Activated CD4-positive, alpha-beta T cell treated with anti-CD3 and anti-CD28 coated beads for 36 hours (primary cell): ENCODE measurements at regions of chr17 and their contacts with region 1.

Region 1: GRCh38 chr17:36072431-36073121 is 8.5 kb downstream of the CCL18 start:
- DNase-seq: peak; percentile 88
- ATAC-seq: peak; percentile 85
- H3K4me3 Mint-ChIP-seq: no peak overlapping the region
- H3K27ac Mint-ChIP-seq: peak overlapping the region; percentile 58
- H3K4me1 Mint-ChIP-seq: peaks cover 27% of the 10 kb centered on the region
- H3K27me3 Mint-ChIP-seq: peaks cover 15% of the 10 kb centered on the region

Region 2: DNA sequence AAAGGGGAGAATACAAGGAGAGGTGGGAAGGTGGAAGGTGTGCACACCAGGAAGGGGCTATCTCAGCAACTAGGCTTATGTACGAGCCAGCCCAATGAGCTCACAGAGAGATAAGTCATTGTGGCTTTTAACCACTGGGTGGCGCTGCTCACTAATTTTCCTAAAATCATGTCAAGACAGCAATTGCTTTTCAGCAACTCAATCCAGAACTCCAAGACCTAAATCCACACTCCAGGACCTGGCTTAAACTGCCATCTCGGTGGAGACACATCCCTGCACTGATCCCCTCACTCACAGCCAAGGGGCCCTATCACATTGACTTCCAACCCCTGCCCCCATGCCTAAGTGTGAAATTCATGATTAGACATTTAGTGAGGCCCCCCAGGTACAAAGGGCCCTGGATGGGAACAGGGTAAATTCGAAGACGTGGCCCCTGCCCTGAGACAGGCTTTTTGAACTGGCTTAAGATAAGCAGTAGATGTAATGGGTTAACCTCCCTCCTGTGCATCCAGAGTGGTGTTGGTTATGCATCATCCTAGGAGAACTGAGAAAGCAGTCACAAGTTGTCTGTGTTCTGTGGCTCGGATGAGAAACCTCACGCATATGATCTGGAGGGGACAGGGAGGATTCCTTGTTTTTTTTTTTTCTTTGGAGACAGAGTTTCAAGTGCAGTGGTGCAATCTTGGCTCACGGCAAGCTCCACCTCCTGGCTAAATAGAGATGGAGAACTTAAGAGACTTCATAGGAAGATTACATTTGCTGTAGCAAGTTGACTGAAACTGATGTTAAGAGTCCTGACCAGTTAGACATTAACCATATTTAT is 102.8 kb before region 1 on chr17:
- CTCF ChIA-PET with region 1: interaction called, 20 read pairs
- POLR2A ChIA-PET with region 1: no interaction called
- intact Hi-C with region 1: loop called (anchors 1 to 2 kb)
- DNase-seq: peak; percentile 86
- ATAC-seq: peak; percentile 79
- H3K4me3 Mint-ChIP-seq: no peak overlapping the region
- H3K27ac Mint-ChIP-seq: no peak overlapping the region
- H3K4me1 Mint-ChIP-seq: no peaks in the 10 kb centered on the region
- H3K27me3 Mint-ChIP-seq: no peaks in the 10 kb centered on the region

Region 3: GRCh38 chr17:36057911-36058310 is 14.7 kb before region 1 on chr17:
- CTCF ChIA-PET with region 1: interaction called, 24 read pairs
- POLR2A ChIA-PET with region 1: no interaction called
- intact Hi-C with region 1: no loop called
- DNase-seq: no peak
- ATAC-seq: no peak
- H3K4me3 Mint-ChIP-seq: no peak overlapping the region
- H3K27ac Mint-ChIP-seq: no peak overlapping the region
- H3K4me1 Mint-ChIP-seq: no peaks in the 10 kb centered on the region
- H3K27me3 Mint-ChIP-seq: peaks cover 13% of the 10 kb centered on the region

Region 4: DNA sequence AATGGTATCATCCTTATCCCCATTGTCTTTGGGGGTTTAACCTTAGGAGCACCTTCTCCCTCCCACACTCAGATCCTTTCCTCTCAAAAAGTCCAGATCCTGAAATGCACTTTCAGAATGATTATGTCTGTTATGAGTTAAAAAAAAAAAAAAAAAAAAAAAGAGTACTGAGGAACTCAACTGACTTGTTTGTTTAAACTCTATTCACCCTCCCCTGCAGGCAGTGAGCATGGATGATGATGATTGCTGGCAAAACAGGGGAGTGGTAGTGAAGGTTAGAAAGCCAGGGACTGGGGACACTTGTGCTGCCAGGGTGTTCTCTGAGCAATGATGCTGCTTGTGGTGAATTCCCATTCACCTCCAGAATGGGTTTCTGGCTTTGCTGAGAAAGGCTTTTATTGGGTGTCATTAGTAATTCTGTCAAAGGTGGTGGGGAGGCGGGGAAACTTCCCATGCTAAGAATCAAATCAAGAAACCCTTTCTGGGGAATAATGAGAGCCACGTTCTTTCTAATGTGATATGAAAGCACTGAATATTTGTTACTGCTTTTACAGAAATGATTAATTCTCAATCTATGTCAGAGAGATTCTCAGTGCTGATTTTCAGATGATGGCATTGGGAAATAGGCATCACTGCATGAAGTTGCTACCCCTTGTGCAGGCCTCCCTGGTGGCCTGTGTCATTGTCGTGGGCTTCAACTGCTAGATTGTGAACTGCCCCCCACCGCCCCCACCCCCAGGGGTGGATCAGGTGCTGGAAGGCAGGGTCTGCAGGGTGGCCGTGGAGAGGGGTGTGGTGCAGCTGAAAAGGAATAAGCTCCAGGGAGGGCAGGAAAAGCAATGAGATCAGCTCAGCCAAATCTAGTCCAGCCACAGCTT is 45.2 kb after region 1 on chr17:
- CTCF ChIA-PET with region 1: interaction called, 9 read pairs
- POLR2A ChIA-PET with region 1: no interaction called
- intact Hi-C with region 1: loop called (anchors 1 kb)
- DNase-seq: peak; percentile 77
- ATAC-seq: peak; percentile 92
- H3K4me3 Mint-ChIP-seq: peak overlapping the region; percentile 21
- H3K27ac Mint-ChIP-seq: peak overlapping the region; percentile 72
- H3K4me1 Mint-ChIP-seq: peaks cover 40% of the 10 kb centered on the region
- H3K27me3 Mint-ChIP-seq: peaks cover 22% of the 10 kb centered on the region

Region 5: DNA sequence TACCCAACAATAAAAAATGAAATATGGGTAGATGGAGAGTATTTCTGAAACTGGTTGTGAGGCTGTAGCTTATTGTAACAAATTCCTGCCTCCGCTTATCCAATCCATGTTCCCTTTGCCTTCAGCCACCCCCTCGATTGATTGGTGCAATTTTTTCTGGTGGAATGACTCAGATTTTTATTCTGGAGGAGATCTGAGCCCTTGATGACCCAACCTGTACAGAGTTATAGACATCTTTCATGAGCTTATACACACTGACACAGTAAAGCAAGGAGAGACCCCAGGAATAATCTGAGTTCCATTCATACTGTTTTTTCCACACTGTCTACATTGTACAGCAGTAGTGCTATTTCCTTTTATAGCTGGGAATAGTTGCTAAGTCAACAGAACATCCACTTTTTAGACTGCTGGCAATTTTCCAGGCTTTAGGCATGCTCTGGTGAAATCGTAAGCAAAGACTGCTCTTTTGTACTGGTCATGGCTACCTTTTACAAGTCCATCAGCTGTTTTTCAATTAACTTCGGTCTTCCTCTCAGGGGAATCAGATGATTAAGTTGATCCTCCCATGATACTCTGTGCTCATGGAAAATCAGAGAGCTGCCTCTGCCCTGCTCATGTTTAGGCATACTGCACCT is 61.1 kb after region 1 on chr17:
- CTCF ChIA-PET with region 1: interaction called, 11 read pairs
- POLR2A ChIA-PET with region 1: no interaction called
- intact Hi-C with region 1: no loop called
- DNase-seq: no peak
- ATAC-seq: no peak
- H3K4me3 Mint-ChIP-seq: no peak overlapping the region
- H3K27ac Mint-ChIP-seq: no peak overlapping the region
- H3K4me1 Mint-ChIP-seq: no peaks in the 10 kb centered on the region
- H3K27me3 Mint-ChIP-seq: peaks cover 27% of the 10 kb centered on the region

Region 6: GRCh38 chr17:36486204-36487194 is 413.9 kb after region 1 on chr17 and contains the start of gene ZNHIT3:
- CTCF ChIA-PET with region 1: no interaction called
- POLR2A ChIA-PET with region 1: no interaction called
- intact Hi-C with region 1: loop called in 1 of 2 experiments (anchors 5 kb)
- DNase-seq: peak; percentile 95
- ATAC-seq: peak; percentile 94
- H3K4me3 Mint-ChIP-seq: peak within 1 kb of the TSS; percentile 84
- H3K27ac Mint-ChIP-seq: peak within 1 kb of the TSS; percentile 96
- H3K4me1 Mint-ChIP-seq: peaks cover 50% of the 10 kb centered on the region
- H3K27me3 Mint-ChIP-seq: peaks cover 10% of the 10 kb centered on the region
- total RNA-seq, gene ZNHIT3: 38.2 to 42.3 TPM